Breast epithelium (tissue), 4 donors: ENCODE measurements at regions of chr2 and their contacts with region 1.

Region 1: DNA sequence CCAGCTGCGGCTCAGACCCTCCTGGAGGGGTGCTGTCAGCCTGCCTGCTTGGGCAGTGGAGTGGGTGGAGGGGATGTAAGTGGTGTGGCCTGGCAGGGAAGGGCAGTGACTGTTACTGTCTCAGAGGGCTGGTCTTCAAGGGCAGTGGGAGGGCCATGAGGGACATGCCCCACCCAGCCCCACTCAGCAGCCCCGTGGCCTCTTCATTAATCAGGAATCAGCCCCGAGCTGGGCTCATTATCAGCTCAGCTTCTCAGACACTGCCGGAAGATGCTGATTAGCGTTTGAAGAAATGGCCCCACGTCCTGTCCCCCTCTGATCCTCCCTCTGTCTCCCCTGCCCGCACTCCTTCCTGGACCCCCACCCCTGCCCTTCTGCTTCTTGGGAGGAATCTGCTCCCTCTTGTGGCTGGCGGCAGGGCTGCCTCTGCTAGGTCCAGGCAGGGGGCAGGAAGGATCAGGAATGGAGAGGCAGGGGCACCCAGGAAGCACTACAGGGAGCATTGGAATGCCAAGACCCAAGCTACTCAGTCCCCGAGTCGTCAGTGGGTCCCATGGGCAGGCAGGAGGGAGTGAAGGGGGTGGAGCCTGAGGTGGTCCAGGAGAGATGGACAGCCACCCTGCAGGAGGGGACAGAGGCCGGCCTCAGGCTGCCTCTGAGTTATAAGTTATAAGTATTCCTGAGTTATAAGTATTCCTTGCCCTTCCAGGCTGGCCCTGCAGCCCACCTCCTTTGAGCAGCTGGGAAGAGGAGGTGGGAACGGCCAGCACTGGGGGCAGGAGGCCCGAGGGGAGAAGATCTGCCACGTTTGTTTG is 7.0 kb downstream of the ASIC4 start:
- DNase-seq: no peak
- H3K4me3 ChIP-seq: peak overlapping the region in 1 of 3 donors; percentile 44
- H3K27ac ChIP-seq: peak overlapping the region in 1 of 2 donors; percentile 38
- H3K4me1 ChIP-seq: peaks cover 0 to 8% of the 10 kb centered on the region in 2 donors
- H3K27me3 ChIP-seq: peaks cover 2 to 44% of the 10 kb centered on the region in 2 donors
- CTCF ChIP-seq: peak; percentile 31 to 51 (median 38)
- POLR2A ChIP-seq: no peak

Region 2: GRCh38 chr2:219402665-219403515 is 118.4 kb before region 1 on chr2:
- intact Hi-C with region 1: loop called (anchors 10 kb)
- DNase-seq: peak in 1 of 2 donors; percentile 64
- H3K4me3 ChIP-seq: no peak overlapping the region
- H3K27ac ChIP-seq: no peak overlapping the region
- H3K4me1 ChIP-seq: peaks cover 0 to 5% of the 10 kb centered on the region in 2 donors
- H3K27me3 ChIP-seq: no peaks in the 10 kb centered on the region
- CTCF ChIP-seq: peak; percentile 76 to 89 (median 87)
- POLR2A ChIP-seq: no peak

Region 3: GRCh38 chr2:219418155-219418569 is 103.1 kb before region 1 on chr2 and contains the start of gene DES:
- intact Hi-C with region 1: no loop called
- DNase-seq: no peak
- H3K4me3 ChIP-seq: peak within 1 kb of the TSS; percentile 31 to 60 (median 32)
- H3K27ac ChIP-seq: no peak within 1 kb of the TSS
- H3K4me1 ChIP-seq: no peaks in the 10 kb centered on the region
- H3K27me3 ChIP-seq: peaks cover 0 to 14% of the 10 kb centered on the region in 2 donors
- CTCF ChIP-seq: no peak
- POLR2A ChIP-seq: no peak
- total RNA-seq, gene DES: 17.1 to 29.6 (median 29.5) TPM

Region 4: GRCh38 chr2:219475697-219476651 is 45.3 kb before region 1 on chr2:
- intact Hi-C with region 1: loop called (anchors 10 kb)
- DNase-seq: peak in 1 of 2 donors; percentile 69
- H3K4me3 ChIP-seq: peak overlapping the region in 2 of 3 donors; percentile 20 to 34
- H3K27ac ChIP-seq: no peak overlapping the region
- H3K4me1 ChIP-seq: no peaks in the 10 kb centered on the region
- H3K27me3 ChIP-seq: no peaks in the 10 kb centered on the region
- CTCF ChIP-seq: peak; percentile 66 to 71 (median 68)
- POLR2A ChIP-seq: no peak